OCI-LY7 (cell line): ENCODE measurements at regions of chr15 and their contacts with region 1.

Region 1: GRCh38 chr15:36517758-36518157 is 61.7 kb upstream of the CDIN1 start:
- DNase-seq: no peak
- H3K4me3 ChIP-seq: no peak overlapping the region
- H3K27ac ChIP-seq: no peak overlapping the region
- H3K4me1 ChIP-seq: no peaks in the 10 kb centered on the region
- CTCF ChIP-seq: no peak

Region 2: GRCh38 chr15:36468746-36469145 is 49.0 kb before region 1 on chr15:
- CTCF ChIA-PET with region 1: no interaction called
- POLR2A ChIA-PET with region 1: no interaction called
- intact Hi-C with region 1: no loop called
- DNase-seq: no peak
- H3K4me3 ChIP-seq: no peak overlapping the region
- H3K27ac ChIP-seq: no peak overlapping the region
- H3K4me1 ChIP-seq: no peaks in the 10 kb centered on the region
- CTCF ChIP-seq: no peak

Region 3: GRCh38 chr15:36567445-36567844 is 49.7 kb after region 1 on chr15:
- CTCF ChIA-PET with region 1: no interaction called
- POLR2A ChIA-PET with region 1: no interaction called
- intact Hi-C with region 1: loop called (anchors 5 kb)
- DNase-seq: no peak
- H3K4me3 ChIP-seq: no peak overlapping the region
- H3K27ac ChIP-seq: no peak overlapping the region
- H3K4me1 ChIP-seq: no peaks in the 10 kb centered on the region
- CTCF ChIP-seq: no peak

Region 4: DNA sequence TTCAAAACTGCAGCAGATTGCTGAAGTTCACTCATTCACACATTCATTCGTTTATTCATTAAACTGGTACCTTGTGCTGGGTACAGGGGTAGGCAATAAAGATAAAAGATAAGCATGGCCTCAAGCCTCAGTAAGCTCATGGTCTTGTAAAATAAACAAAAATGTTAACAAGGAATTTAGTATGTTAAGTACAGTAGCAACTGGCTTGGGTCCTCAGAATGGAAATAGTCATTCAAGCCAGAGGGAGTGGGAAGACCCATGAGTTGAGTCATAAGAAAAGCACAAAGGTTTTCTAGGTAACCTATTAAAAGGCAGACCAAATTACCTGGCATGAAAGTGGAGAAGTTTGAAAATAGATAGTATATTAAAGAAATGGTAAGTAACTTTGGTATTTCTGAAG is 224.9 kb after region 1 on chr15:
- CTCF ChIA-PET with region 1: no interaction called
- POLR2A ChIA-PET with region 1: no interaction called
- intact Hi-C with region 1: no loop called
- DNase-seq: no peak
- H3K4me3 ChIP-seq: no peak overlapping the region
- H3K27ac ChIP-seq: no peak overlapping the region
- H3K4me1 ChIP-seq: no peaks in the 10 kb centered on the region
- CTCF ChIP-seq: no peak